Ovary (tissue), 10 donors: ENCODE measurements at regions of chr2 and their contacts with region 1.

Region 1: GRCh38 chr2:171416009-171416926 is 17.5 kb downstream of the METTL8 start:
- DNase-seq: peak; percentile 82 to 90 (median 86)
- H3K4me3 ChIP-seq: no peak overlapping the region
- H3K27ac ChIP-seq: no peak overlapping the region
- H3K4me1 ChIP-seq: peaks cover 3% of the 10 kb centered on the region
- H3K27me3 ChIP-seq: no peaks in the 10 kb centered on the region
- CTCF ChIP-seq: peak; percentile 53 to 78 (median 56)
- EP300 ChIP-seq: no peak
- POLR2A ChIP-seq: no peak

Region 2: GRCh38 chr2:170973492-170974303 is 442.6 kb before region 1 on chr2:
- intact Hi-C with region 1: loop called (anchors 1 to 10 kb)
- DNase-seq: peak; percentile 83 to 93 (median 90)
- H3K4me3 ChIP-seq: peak overlapping the region; percentile 71
- H3K27ac ChIP-seq: peak overlapping the region; percentile 76 to 77
- H3K4me1 ChIP-seq: peaks cover 2% of the 10 kb centered on the region
- H3K27me3 ChIP-seq: no peaks in the 10 kb centered on the region
- CTCF ChIP-seq: peak; percentile 86 to 98 (median 98)
- EP300 ChIP-seq: no peak
- POLR2A ChIP-seq: no peak